Activated CD4-positive, alpha-beta T cell treated with anti-CD3 and anti-CD28 coated beads for 36 hours (primary cell): ENCODE measurements at regions of chr3 and their contacts with region 1.

Region 1: GRCh38 chr3:88203642-88204055 is 53.9 kb downstream of the C3orf38 start:
- DNase-seq: peak; percentile 78
- ATAC-seq: peak; percentile 80
- H3K4me3 Mint-ChIP-seq: no peak overlapping the region
- H3K27ac Mint-ChIP-seq: no peak overlapping the region
- H3K4me1 Mint-ChIP-seq: no peaks in the 10 kb centered on the region
- H3K27me3 Mint-ChIP-seq: no peaks in the 10 kb centered on the region

Region 2: GRCh38 chr3:89098964-89099585 is 895.4 kb after region 1 on chr3:
- CTCF ChIA-PET with region 1: no interaction called
- POLR2A ChIA-PET with region 1: no interaction called
- intact Hi-C with region 1: loop called (anchors 1 to 5 kb)
- DNase-seq: peak; percentile 52
- ATAC-seq: peak; percentile 81
- H3K4me3 Mint-ChIP-seq: no peak overlapping the region
- H3K27ac Mint-ChIP-seq: no peak overlapping the region
- H3K4me1 Mint-ChIP-seq: no peaks in the 10 kb centered on the region
- H3K27me3 Mint-ChIP-seq: peaks cover 2% of the 10 kb centered on the region

Region 3: DNA sequence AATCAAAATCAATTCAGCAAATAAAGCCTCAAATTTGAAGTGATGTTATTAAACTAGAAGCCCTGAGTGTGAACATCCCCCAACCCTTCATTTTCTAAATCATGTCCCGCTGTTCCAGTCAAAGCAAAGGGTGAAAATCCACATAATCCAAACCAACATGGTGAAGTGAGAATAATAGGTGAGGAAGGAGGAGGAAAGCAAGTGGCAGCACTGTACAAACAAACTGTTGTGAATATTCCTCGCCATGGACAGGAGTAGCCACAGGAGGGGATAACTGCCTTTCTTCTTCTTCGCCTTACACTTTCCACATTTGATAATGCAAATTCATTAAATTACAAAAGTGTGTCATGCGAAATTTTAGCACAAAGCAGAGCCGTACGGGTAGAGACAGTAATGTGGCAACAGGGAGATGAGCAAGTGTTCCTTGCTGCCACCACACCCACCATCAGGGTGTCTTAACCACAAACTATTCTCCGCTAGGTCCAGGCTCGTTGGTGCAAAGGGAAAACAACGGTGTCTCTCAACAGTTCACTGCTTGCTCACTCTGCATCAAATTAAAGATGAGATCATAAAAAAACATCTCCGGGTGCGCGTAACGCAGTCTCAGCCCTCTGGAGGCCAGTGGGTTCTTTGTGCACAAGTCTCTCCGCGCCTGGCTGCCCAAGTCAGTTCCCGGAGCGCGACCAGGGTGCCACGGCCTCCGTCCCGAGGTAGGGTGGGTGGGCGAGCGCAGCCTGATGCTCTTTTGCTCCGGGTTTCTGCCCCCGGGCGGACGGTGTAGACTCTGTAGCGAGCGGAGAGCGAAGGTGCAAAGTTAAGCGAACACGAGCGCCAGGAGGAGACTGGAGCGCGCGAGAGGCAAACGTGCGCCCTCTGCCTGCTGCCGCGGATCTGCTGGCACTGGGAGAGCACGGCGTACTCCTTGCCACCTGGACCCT is 910.5 kb after region 1 on chr3:
- CTCF ChIA-PET with region 1: no interaction called
- POLR2A ChIA-PET with region 1: no interaction called
- intact Hi-C with region 1: loop called in 1 of 2 experiments (anchors 2 kb)
- DNase-seq: peak; percentile 72
- ATAC-seq: peak; percentile 87
- H3K4me3 Mint-ChIP-seq: peak overlapping the region; percentile 53
- H3K27ac Mint-ChIP-seq: no peak overlapping the region
- H3K4me1 Mint-ChIP-seq: peaks cover 7% of the 10 kb centered on the region
- H3K27me3 Mint-ChIP-seq: peaks cover 21% of the 10 kb centered on the region

Region 4: GRCh38 chr3:90091204-90091924 is 1887.7 kb after region 1 on chr3:
- CTCF ChIA-PET with region 1: interaction called, 4 read pairs
- POLR2A ChIA-PET with region 1: no interaction called
- intact Hi-C with region 1: loop called in 1 of 2 experiments (anchors 5 kb)
- DNase-seq: peak; percentile 5
- ATAC-seq: no peak
- H3K4me3 Mint-ChIP-seq: no peak overlapping the region
- H3K27ac Mint-ChIP-seq: no peak overlapping the region
- H3K4me1 Mint-ChIP-seq: no peaks in the 10 kb centered on the region
- H3K27me3 Mint-ChIP-seq: no peaks in the 10 kb centered on the region